Activated B cell treated with CpG ODN at 0.5 μM for 24 hours (primary cell): ENCODE measurements at regions of chr6 and their contacts with region 1.

Region 1: GRCh38 chr6:73471686-73472290 is 10.3 kb downstream of the MTO1 start:
- DNase-seq: no peak
- ATAC-seq: peak; percentile 95
- H3K4me3 Mint-ChIP-seq: peak overlapping the region; percentile 75
- H3K27ac Mint-ChIP-seq: peak overlapping the region; percentile 90
- H3K4me1 Mint-ChIP-seq: peaks cover 25% of the 10 kb centered on the region
- H3K27me3 Mint-ChIP-seq: no peaks in the 10 kb centered on the region
- CTCF ChIP-seq: no peak

Region 2: GRCh38 chr6:73451223-73452107 is 20.3 kb before region 1 on chr6:
- CTCF ChIA-PET with region 1: interaction called, 3 read pairs
- POLR2A ChIA-PET with region 1: interaction called, 44 read pairs
- intact Hi-C with region 1: loop called (anchors 1 kb)
- DNase-seq: peak; percentile 54
- ATAC-seq: peak; percentile 59
- H3K4me3 Mint-ChIP-seq: peak overlapping the region; percentile 93
- H3K27ac Mint-ChIP-seq: peak overlapping the region; percentile 91
- H3K4me1 Mint-ChIP-seq: peaks cover 22% of the 10 kb centered on the region
- H3K27me3 Mint-ChIP-seq: no peaks in the 10 kb centered on the region
- CTCF ChIP-seq: no peak

Region 3: GRCh38 chr6:73487473-73487872 is 15.7 kb after region 1 on chr6:
- CTCF ChIA-PET with region 1: no interaction called
- POLR2A ChIA-PET with region 1: no interaction called
- intact Hi-C with region 1: loop called (anchors 2 kb)
- DNase-seq: no peak
- ATAC-seq: no peak
- H3K4me3 Mint-ChIP-seq: no peak overlapping the region
- H3K27ac Mint-ChIP-seq: no peak overlapping the region
- H3K4me1 Mint-ChIP-seq: peaks cover 2% of the 10 kb centered on the region
- H3K27me3 Mint-ChIP-seq: no peaks in the 10 kb centered on the region
- CTCF ChIP-seq: no peak

Region 4: DNA sequence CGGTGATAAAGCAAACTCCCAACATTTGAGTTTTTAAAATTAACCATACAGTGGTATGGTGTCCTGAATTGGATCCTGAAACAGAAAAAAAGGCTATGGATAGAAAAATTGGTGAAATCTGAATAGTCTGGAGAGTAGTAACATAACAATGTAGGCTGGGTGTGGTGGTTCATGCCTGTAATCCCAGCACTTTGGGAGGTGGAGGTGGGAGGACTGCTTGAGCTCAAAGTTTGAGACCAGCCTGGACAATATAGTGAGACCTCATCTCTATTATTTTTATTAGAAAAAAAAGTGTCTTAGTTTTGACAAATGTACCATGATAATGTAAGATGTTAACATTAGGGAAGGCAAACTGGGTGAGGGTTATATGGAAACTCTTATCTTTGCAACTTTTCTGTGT is 38.1 kb after region 1 on chr6:
- CTCF ChIA-PET with region 1: no interaction called
- POLR2A ChIA-PET with region 1: interaction called, 8 read pairs
- intact Hi-C with region 1: loop called (anchors 1 kb)
- DNase-seq: no peak
- ATAC-seq: no peak
- H3K4me3 Mint-ChIP-seq: no peak overlapping the region
- H3K27ac Mint-ChIP-seq: no peak overlapping the region
- H3K4me1 Mint-ChIP-seq: peaks cover 27% of the 10 kb centered on the region
- H3K27me3 Mint-ChIP-seq: no peaks in the 10 kb centered on the region
- CTCF ChIP-seq: no peak

Region 5: GRCh38 chr6:74075323-74075722 is 603.5 kb after region 1 on chr6:
- CTCF ChIA-PET with region 1: no interaction called
- POLR2A ChIA-PET with region 1: no interaction called
- intact Hi-C with region 1: no loop called
- DNase-seq: no peak
- ATAC-seq: no peak
- H3K4me3 Mint-ChIP-seq: no peak overlapping the region
- H3K27ac Mint-ChIP-seq: no peak overlapping the region
- H3K4me1 Mint-ChIP-seq: no peaks in the 10 kb centered on the region
- H3K27me3 Mint-ChIP-seq: no peaks in the 10 kb centered on the region
- CTCF ChIP-seq: no peak